ENCODE measurements at regions of chr1 and their contacts with region 1.

Region 1: DNA sequence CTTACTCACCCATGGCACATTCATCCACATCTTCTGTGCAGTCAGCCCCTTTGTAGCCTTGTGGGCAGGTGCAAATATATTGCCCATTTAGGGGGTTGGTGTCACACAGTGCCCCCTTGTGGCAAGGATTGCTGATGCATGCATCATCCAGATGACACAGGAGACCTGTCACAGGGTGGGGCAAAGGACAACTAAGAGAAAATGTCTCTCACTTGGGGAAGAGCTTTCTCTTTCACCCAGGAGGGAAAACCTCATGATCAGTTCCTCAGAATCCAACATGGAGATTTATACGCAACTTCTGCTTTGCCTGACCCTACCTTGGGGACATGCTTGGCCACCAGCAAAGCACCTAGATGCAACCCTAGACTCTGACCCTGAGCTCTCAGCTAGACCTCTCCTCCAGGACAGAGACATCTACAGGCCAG is 71.8 kb upstream of the ADAM30 start:
- DNase-seq: peak; percentile 28 to 72 (median 59)
- ATAC-seq: peak; percentile 98
- H3K4me3 ChIP-seq: no peak overlapping the region
- H3K4me3 Mint-ChIP-seq: no peak overlapping the region
- H3K27ac ChIP-seq: no peak overlapping the region
- H3K27ac Mint-ChIP-seq: peak overlapping the region in 4 of 9 donors; percentile 2 to 79 (median 4)
- H3K4me1 ChIP-seq: no peaks in the 10 kb centered on the region
- H3K4me1 Mint-ChIP-seq: peaks cover 0 to 23% (median 4%) of the 10 kb centered on the region in 7 donors
- H3K27me3 ChIP-seq: no peaks in the 10 kb centered on the region
- H3K27me3 Mint-ChIP-seq: no peaks in the 10 kb centered on the region

Region 2: DNA sequence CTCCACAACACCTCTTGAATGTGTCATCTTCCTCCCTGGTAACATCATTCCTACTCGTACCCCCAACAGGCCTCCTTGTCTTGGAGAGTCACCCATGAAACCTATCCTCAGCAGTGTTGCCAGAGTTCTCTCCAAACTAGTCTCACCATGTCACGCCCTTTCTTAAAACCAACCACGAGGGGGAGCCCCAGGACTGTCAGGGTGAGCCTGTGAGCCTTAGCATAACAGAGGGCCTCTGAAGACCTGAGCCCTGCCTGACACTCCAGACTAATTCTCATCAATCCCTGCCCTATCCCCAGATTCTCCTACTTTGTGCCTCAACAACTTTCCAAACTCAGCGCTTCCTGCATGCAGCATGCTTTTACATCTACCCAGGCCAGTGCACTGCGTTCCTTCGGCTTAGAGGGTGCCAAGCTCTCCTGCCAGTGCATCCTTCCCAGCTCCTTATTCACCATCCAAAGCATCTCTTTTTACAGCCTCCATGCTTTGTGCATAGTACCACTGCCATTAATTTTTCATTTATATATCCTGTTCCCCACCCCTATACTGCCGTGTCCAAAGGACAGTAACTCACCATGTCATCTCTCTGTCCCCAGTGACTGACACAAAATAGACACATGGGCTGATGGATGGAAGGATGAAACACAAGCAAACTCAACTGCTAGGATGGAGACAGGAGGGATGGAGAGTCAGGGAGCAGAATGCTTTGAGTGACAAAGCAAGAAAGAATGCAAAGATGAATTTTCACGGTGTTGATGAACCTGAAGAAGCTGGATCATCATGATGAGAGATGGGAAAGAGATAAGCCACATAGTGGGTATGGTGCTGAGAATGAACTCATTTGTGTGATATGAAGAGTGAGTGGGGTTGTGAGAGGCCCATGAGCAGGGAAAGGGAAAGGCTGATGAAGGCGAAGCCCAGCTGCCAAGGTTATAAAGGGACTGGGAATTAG is 354.0 kb before region 1 on chr1:
- CTCF ChIA-PET with region 1: no interaction called
- POLR2A ChIA-PET with region 1: no interaction called
- intact Hi-C with region 1: loop called in 1 of 2 experiments (anchors 5 kb)
- DNase-seq: peak; percentile 18 to 77 (median 40)
- ATAC-seq: peak; percentile 78
- H3K4me3 ChIP-seq: no peak overlapping the region
- H3K4me3 Mint-ChIP-seq: no peak overlapping the region
- H3K27ac ChIP-seq: no peak overlapping the region
- H3K27ac Mint-ChIP-seq: no peak overlapping the region
- H3K4me1 ChIP-seq: no peaks in the 10 kb centered on the region
- H3K4me1 Mint-ChIP-seq: peaks cover 0 to 3% (median 0%) of the 10 kb centered on the region in 7 donors
- H3K27me3 ChIP-seq: no peaks in the 10 kb centered on the region
- H3K27me3 Mint-ChIP-seq: peaks cover 0 to 13% (median 7%) of the 10 kb centered on the region in 5 donors

Region 3: GRCh38 chr1:119743781-119744597 is 224.1 kb before region 1 on chr1:
- CTCF ChIA-PET with region 1: interaction called, 3 read pairs
- POLR2A ChIA-PET with region 1: no interaction called
- intact Hi-C with region 1: loop called in 1 of 2 experiments (anchors 1 kb)
- DNase-seq: peak in 7 of 9 donors; percentile 22 to 51 (median 37)
- ATAC-seq: peak; percentile 67
- H3K4me3 ChIP-seq: no peak overlapping the region
- H3K4me3 Mint-ChIP-seq: no peak overlapping the region
- H3K27ac ChIP-seq: no peak overlapping the region
- H3K27ac Mint-ChIP-seq: no peak overlapping the region
- H3K4me1 ChIP-seq: no peaks in the 10 kb centered on the region
- H3K4me1 Mint-ChIP-seq: peaks cover 0 to 13% (median 0%) of the 10 kb centered on the region in 7 donors
- H3K27me3 ChIP-seq: no peaks in the 10 kb centered on the region
- H3K27me3 Mint-ChIP-seq: no peaks in the 10 kb centered on the region

Region 4: DNA sequence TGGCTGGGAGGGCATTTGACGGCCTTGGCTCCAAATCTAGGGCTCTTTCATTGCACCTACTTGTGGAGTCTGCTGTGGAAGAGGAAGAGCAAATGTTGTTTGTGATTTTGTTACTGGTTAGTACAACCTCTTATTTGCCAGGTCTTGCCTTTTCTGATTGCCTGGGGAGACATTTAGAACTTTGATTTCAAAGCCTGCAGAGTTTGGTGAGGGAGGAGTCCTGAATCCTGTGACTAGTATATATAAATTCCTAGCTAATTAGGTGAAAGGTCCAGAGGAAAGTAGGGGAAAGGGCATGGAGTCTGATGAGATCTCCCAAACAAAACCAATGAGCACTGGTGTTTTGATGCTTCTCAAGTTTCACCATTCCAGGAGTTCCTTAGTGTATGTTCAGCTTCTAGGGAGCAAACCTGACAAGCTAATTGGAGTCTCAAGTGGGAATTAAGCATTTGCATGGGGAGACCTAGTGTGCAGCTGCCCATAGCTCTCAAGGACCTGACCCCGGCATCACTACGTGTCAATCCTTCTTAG is 194.3 kb before region 1 on chr1:
- CTCF ChIA-PET with region 1: no interaction called
- POLR2A ChIA-PET with region 1: no interaction called
- intact Hi-C with region 1: no loop called
- DNase-seq: no peak
- ATAC-seq: no peak
- H3K4me3 ChIP-seq: no peak overlapping the region
- H3K4me3 Mint-ChIP-seq: no peak overlapping the region
- H3K27ac ChIP-seq: no peak overlapping the region
- H3K27ac Mint-ChIP-seq: no peak overlapping the region
- H3K4me1 ChIP-seq: no peaks in the 10 kb centered on the region
- H3K4me1 Mint-ChIP-seq: no peaks in the 10 kb centered on the region
- H3K27me3 ChIP-seq: no peaks in the 10 kb centered on the region
- H3K27me3 Mint-ChIP-seq: peaks cover 0 to 21% (median 9%) of the 10 kb centered on the region in 5 donors

Region 5: DNA sequence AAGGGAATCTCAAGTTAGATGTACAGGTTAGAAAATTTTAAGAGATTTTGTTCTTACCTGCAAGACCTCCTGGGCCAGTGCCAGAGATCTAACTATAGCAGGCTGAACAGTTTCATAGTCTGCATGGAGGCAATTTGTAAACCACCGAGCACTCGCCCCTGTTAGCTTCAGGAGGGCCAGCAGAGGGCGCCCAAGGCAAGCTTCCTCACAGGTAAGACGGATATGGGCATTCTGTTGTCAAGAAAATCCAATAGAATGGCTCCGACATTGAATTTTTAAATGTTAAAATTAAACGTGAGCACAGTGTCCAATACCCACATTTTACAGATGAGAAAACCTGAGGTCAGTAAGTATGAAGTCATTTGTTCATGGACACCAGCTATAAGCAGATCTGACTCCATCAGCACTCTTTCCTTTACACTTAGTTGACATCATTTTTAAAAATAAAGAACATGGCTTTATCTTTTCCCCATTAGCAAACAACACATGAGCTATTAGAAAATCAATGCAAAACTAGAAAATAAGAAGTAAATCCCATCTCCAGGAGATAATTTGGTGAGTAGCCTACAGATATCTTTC is 159.0 kb before region 1 on chr1:
- CTCF ChIA-PET with region 1: no interaction called
- POLR2A ChIA-PET with region 1: no interaction called
- intact Hi-C with region 1: loop called in 1 of 2 experiments (anchors 5 kb)
- DNase-seq: peak; percentile 29 to 68 (median 57)
- ATAC-seq: peak; percentile 85
- H3K4me3 ChIP-seq: no peak overlapping the region
- H3K4me3 Mint-ChIP-seq: peak overlapping the region in 3 of 10 donors; percentile 16 to 51 (median 41)
- H3K27ac ChIP-seq: no peak overlapping the region
- H3K27ac Mint-ChIP-seq: no peak overlapping the region
- H3K4me1 ChIP-seq: no peaks in the 10 kb centered on the region
- H3K4me1 Mint-ChIP-seq: peaks cover 0 to 10% (median 5%) of the 10 kb centered on the region in 7 donors
- H3K27me3 ChIP-seq: peaks cover 0 to 4% of the 10 kb centered on the region in 2 donors
- H3K27me3 Mint-ChIP-seq: peaks cover 10 to 62% (median 16%) of the 10 kb centered on the region in 5 donors

Region 6: GRCh38 chr1:119870917-119871596 is 97.0 kb before region 1 on chr1:
- CTCF ChIA-PET with region 1: no interaction called
- POLR2A ChIA-PET with region 1: no interaction called
- intact Hi-C with region 1: loop called in 1 of 2 experiments (anchors 1 kb)
- DNase-seq: peak; percentile 4 to 71 (median 34)
- ATAC-seq: peak; percentile 88
- H3K4me3 ChIP-seq: no peak overlapping the region
- H3K4me3 Mint-ChIP-seq: peak overlapping the region in 1 of 10 donors; percentile 36
- H3K27ac ChIP-seq: no peak overlapping the region
- H3K27ac Mint-ChIP-seq: no peak overlapping the region
- H3K4me1 ChIP-seq: no peaks in the 10 kb centered on the region
- H3K4me1 Mint-ChIP-seq: peaks cover 0 to 13% (median 0%) of the 10 kb centered on the region in 7 donors
- H3K27me3 ChIP-seq: no peaks in the 10 kb centered on the region
- H3K27me3 Mint-ChIP-seq: peaks cover 9 to 45% (median 23%) of the 10 kb centered on the region in 5 donors

Region 7: DNA sequence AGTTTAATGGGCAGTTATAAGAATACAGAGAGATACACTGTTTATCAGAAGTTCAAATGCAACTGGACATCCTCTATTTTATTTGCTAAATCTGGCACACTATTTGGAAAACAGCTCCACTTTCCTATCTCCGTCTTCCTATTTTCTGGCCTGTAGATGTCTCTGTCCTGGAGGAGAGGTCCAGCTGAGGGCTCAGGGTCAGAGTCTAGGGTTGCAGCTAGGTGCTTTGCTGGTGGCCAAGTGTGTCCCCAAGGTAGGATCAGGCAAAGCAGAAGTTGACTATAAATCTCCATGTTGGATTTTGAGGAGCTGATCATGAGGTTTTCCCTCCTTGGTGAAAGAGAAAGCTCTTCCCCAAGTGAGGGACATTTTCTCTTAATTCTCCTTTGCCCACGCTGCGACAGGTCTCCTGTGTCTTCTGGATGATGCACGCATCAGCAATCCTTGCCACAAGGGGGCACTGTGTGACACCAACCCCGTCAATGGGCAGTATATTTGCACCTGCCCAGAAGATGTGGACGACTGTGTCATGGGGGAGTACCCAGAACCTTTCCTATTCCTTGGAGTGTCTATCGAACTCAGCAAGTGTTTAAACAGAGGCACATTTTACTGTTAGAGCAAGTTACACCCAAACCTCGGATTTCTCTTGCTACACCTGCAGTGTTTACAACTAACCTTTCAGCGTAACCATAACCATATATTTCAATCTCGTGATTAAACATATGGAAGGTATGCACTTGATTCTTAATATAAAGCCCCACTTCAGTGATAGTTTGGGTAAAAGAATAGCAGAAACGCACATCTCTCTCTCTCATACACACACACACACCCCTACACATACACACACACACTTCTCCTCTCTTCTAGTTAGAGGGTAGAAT is 81.9 kb before region 1 on chr1:
- CTCF ChIA-PET with region 1: no interaction called
- POLR2A ChIA-PET with region 1: no interaction called
- intact Hi-C with region 1: no loop called
- DNase-seq: peak in 8 of 9 donors; percentile 20 to 54 (median 28)
- ATAC-seq: peak; percentile 79
- H3K4me3 ChIP-seq: no peak overlapping the region
- H3K4me3 Mint-ChIP-seq: no peak overlapping the region
- H3K27ac ChIP-seq: no peak overlapping the region
- H3K27ac Mint-ChIP-seq: no peak overlapping the region
- H3K4me1 ChIP-seq: no peaks in the 10 kb centered on the region
- H3K4me1 Mint-ChIP-seq: peaks cover 0 to 10% (median 0%) of the 10 kb centered on the region in 7 donors
- H3K27me3 ChIP-seq: no peaks in the 10 kb centered on the region
- H3K27me3 Mint-ChIP-seq: peaks cover 10 to 37% (median 20%) of the 10 kb centered on the region in 5 donors

Region 8: DNA sequence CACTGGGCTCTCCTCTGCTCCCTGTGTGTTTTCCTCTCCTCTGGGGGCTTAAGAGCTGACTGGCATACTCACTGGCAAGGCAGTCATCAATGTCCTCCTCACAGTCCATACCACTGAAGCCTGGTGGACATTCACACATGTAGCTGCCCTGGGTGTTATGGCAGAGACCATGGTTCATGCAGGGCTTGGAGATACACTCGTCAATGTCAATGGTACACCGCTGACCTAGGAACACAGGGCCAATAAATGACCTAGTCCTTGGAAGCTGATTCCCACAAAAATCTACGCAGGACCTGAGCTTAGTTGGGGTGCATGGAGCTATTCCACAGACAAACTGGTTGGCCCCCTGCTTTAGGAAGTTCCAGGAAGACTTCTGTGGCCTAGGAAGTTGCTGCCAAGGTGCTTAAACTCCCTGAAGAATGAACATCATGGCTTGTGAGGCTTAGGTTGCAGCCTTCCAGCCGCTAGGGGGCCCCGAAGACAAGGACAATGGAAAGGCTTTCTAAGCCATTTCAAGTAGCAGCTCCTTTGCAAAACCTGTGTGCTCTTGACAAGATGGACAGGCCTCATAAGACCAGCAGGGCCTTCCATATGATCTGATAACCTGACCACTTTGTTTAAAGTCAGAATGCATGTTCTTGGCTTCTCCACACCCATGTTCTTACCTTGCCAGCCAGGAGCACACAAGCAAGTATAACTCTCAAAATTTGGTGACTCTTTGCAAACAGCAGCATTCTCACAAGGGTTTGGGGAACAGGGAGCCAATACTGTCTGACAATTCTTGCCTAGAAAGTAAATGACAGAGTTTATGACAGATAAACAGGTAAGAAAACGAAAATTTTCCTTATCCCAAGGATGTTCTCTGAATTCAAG is 19.5 kb before region 1 on chr1:
- CTCF ChIA-PET with region 1: interaction called, 6 read pairs
- POLR2A ChIA-PET with region 1: no interaction called
- intact Hi-C with region 1: loop called in 1 of 2 experiments (anchors 1 kb)
- DNase-seq: peak; percentile 30 to 70 (median 57)
- ATAC-seq: peak; percentile 69
- H3K4me3 ChIP-seq: no peak overlapping the region
- H3K4me3 Mint-ChIP-seq: no peak overlapping the region
- H3K27ac ChIP-seq: no peak overlapping the region
- H3K27ac Mint-ChIP-seq: no peak overlapping the region
- H3K4me1 ChIP-seq: no peaks in the 10 kb centered on the region
- H3K4me1 Mint-ChIP-seq: peaks cover 0 to 9% (median 0%) of the 10 kb centered on the region in 7 donors
- H3K27me3 ChIP-seq: no peaks in the 10 kb centered on the region
- H3K27me3 Mint-ChIP-seq: no peaks in the 10 kb centered on the region

Region 9: DNA sequence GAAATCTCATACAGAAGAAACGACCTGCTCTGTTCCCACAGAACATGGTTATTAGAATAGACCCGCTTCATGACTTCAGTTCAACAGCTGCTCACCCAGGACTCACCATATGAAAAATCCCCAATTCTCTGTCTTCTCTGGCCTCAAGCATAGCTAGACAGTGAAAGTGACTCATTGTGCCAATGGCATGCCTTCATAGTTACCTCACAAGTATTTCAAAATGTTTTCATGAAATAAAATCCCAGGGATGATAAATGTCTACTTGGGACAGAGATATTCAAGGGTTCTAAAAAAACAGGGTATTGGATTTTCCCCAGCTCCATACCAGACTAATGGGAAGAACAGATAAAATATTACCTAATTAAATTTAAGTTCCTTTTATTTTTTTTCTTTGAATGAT is 19.0 kb after region 1 on chr1:
- CTCF ChIA-PET with region 1: no interaction called
- POLR2A ChIA-PET with region 1: no interaction called
- intact Hi-C with region 1: no loop called
- DNase-seq: no peak
- ATAC-seq: peak; percentile 72
- H3K4me3 ChIP-seq: no peak overlapping the region
- H3K4me3 Mint-ChIP-seq: peak overlapping the region in 2 of 10 donors; percentile 52 to 62
- H3K27ac ChIP-seq: no peak overlapping the region
- H3K27ac Mint-ChIP-seq: peak overlapping the region in 6 of 9 donors; percentile 43 to 84 (median 78)
- H3K4me1 ChIP-seq: peaks cover 0 to 14% of the 10 kb centered on the region in 2 donors
- H3K4me1 Mint-ChIP-seq: peaks cover 36 to 48% (median 41%) of the 10 kb centered on the region in 7 donors
- H3K27me3 ChIP-seq: no peaks in the 10 kb centered on the region
- H3K27me3 Mint-ChIP-seq: no peaks in the 10 kb centered on the region

Measured in naive thymus-derived CD4-positive, alpha-beta T cell (primary cell).